ENCODE measurements at regions of chr6 and their contacts with region 1.

Region 1: DNA sequence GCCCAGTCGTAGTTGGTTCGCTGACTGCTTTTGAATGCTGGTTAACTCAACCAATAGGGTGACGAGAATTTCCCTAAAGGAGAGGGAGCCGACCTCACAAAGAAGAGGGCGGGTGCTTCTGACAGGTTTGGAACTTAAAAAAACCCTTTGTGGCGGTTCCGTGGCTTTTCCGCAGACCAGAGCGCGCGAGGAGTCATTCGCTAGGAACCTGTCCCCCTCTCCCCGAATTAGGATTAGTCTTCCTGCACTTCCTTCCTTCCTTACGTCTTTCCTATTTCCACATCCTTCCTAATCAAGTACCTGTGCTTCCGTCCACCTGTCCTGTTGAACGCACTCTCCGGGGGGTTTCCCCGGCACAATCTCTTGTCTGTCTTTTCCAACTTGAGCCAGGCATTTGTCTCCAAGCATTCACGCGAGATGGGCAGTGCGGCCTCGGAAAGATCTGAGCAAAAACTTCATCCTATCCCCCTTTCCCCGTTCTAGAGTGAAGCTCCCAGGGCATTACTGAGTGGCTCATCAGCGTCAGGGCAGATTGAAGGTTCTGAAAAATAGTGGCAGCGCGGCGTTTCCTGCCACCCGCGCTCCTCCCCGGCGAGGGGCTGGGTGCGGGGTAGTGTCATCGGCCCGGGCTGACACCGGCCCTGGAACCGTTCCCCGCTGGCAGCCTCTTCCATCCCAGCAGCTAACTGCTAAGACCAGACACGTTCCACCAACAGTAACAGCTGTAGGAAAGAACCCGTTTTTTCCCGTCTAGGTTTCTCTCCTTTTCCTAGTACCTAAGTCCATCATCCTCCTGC is 1.5 kb upstream of the STXBP5 start:
- DNase-seq: peak; percentile 95
- H3K4me3 ChIP-seq: peak overlapping the region; percentile 58 to 92 (median 89)
- H3K27ac ChIP-seq: peak overlapping the region; percentile 86
- H3K4me1 ChIP-seq: peaks cover 20% of the 10 kb centered on the region
- H3K27me3 ChIP-seq: no peaks in the 10 kb centered on the region
- CTCF ChIP-seq: no peak
- POLR2A ChIP-seq: peak; percentile 61

Region 2: GRCh38 chr6:147166360-147166944 is 36.3 kb before region 1 on chr6:
- CTCF ChIA-PET with region 1: no interaction called
- POLR2A ChIA-PET with region 1: no interaction called
- dilution Hi-C with region 1: no loop called
- intact Hi-C with region 1: loop called (anchors 1 kb)
- DNase-seq: peak; percentile 88
- H3K4me3 ChIP-seq: no peak overlapping the region
- H3K27ac ChIP-seq: peak overlapping the region; percentile 71
- H3K4me1 ChIP-seq: peaks cover 22% of the 10 kb centered on the region
- H3K27me3 ChIP-seq: no peaks in the 10 kb centered on the region
- CTCF ChIP-seq: no peak
- POLR2A ChIP-seq: no peak

Region 3: GRCh38 chr6:147222160-147222838 is 19.6 kb after region 1 on chr6:
- CTCF ChIA-PET with region 1: no interaction called
- POLR2A ChIA-PET with region 1: no interaction called
- dilution Hi-C with region 1: no loop called
- intact Hi-C with region 1: loop called (anchors 2 kb)
- DNase-seq: peak; percentile 47
- H3K4me3 ChIP-seq: no peak overlapping the region
- H3K27ac ChIP-seq: no peak overlapping the region
- H3K4me1 ChIP-seq: no peaks in the 10 kb centered on the region
- H3K27me3 ChIP-seq: no peaks in the 10 kb centered on the region
- CTCF ChIP-seq: peak in 1 of 2 donors; percentile 33
- POLR2A ChIP-seq: no peak

Region 4: DNA sequence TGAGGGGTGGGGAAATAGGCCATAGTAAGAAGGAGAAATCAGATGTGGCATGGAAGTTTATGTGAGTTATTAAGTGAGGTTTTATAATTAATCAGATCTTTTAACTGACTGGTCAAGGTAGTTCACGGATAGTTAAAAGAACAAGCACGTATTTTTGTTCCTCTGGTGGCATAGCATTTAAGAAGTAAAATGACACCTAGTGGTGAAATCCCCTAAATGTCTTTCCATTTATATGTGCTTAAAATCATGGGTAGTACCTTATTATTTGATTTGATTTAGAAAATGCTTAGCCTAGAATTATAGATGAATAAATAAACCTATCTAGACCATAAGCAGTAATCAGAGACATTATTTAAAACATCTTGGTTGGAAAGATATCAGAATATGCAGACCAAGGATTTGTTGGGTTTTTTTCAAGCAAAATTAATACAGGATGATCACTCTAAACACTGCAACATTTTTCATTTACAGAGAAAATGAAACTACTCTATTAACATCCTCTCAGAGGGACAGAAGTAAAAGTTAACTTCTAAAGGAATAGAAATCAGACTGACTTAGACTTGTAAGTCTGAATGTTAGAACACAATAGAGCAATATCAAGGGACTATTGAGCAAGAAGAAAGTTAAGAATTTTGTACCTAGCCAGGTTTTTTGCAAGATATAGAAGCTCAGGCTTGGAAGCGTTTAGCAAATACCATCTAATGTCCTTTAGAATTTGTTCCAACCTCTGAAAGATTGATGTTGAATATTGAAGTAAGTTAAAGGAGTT is 82.6 kb after region 1 on chr6:
- CTCF ChIA-PET with region 1: no interaction called
- POLR2A ChIA-PET with region 1: no interaction called
- dilution Hi-C with region 1: no loop called
- intact Hi-C with region 1: loop called (anchors 2 kb)
- DNase-seq: peak; percentile 62
- H3K4me3 ChIP-seq: no peak overlapping the region
- H3K27ac ChIP-seq: no peak overlapping the region
- H3K4me1 ChIP-seq: peaks cover 12% of the 10 kb centered on the region
- H3K27me3 ChIP-seq: no peaks in the 10 kb centered on the region
- CTCF ChIP-seq: peak; percentile 26 to 27
- POLR2A ChIP-seq: no peak